ENCODE measurements at regions of chr11 and their contacts with region 1.

Region 1: GRCh38 chr11:9460322-9461067 is at the start of gene ZNF143:
- DNase-seq: peak; percentile 100
- H3K4me3 Mint-ChIP-seq: peak within 1 kb of the TSS; percentile 93
- H3K27ac Mint-ChIP-seq: peak within 1 kb of the TSS; percentile 97
- H3K4me1 Mint-ChIP-seq: peaks cover 18% of the 10 kb centered on the region
- H3K27me3 Mint-ChIP-seq: no peaks in the 10 kb centered on the region
- total RNA-seq, gene ZNF143: 30.9 and 36.8 TPM in 2 replicates

Region 2: DNA sequence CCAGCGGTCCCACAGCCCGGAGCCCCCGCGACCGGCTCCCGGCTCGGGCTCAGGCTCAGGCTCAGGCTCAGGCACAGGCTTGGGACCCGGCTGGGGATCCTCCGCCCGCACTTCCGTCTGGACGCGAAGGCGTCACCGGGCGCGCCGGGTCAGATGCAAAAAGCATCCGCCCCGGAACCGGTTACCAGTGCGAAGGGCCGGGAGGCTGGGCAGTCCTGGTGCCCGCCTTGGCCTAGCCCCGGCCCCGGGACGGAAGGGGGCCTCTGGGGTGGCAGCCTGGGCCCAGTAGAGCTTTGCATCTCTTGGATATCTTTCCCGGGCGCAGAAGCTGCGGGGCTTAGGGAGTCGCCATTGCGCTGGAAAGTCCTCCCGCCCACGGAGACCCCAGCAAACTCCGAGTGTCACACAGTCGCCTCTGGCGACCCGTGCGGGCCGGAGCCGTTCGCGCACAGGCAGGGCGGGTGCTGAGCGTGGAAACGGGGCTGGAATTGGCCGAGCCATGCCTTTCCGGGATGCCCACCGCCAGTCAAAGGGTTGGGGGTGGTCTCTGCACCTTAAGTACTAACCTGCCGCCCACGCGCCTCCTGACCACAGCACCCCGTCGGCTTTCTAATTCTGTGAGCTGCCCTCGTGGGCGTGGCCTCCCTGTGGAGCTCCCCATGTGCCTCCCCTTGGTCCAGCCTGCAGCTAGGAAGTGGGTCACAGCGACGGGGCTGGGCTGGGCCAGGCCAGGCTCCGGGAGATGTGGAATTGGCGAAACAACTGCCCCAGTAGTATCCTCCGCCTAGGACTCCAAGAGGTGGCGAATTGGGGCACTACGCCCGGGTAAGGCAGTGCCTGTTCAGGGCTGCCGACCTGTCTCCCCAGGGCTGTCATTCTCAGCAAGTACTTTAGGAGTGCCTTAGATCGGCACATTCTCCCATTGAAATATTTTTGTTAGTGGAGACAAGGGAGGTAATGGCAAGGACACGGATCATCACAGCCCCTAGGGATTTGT is 495.9 kb before region 1 on chr11 and contains the start of gene TMEM9B:
- intact Hi-C with region 1: loop called (anchors 1 kb)
- DNase-seq: peak; percentile 79
- H3K4me3 Mint-ChIP-seq: peak within 1 kb of the TSS; percentile 95
- H3K27ac Mint-ChIP-seq: peak within 1 kb of the TSS; percentile 92
- H3K4me1 Mint-ChIP-seq: peaks cover 32% of the 10 kb centered on the region
- H3K27me3 Mint-ChIP-seq: no peaks in the 10 kb centered on the region
- total RNA-seq, gene TMEM9B: 20.8 and 21.9 TPM in 2 replicates

Region 3: GRCh38 chr11:9160166-9160565 is 300.3 kb before region 1 on chr11:
- intact Hi-C with region 1: loop called (anchors 5 kb)
- DNase-seq: no peak
- H3K4me3 Mint-ChIP-seq: no peak overlapping the region
- H3K27ac Mint-ChIP-seq: peak overlapping the region; percentile 69
- H3K4me1 Mint-ChIP-seq: peaks cover 19% of the 10 kb centered on the region
- H3K27me3 Mint-ChIP-seq: no peaks in the 10 kb centered on the region

Region 4: DNA sequence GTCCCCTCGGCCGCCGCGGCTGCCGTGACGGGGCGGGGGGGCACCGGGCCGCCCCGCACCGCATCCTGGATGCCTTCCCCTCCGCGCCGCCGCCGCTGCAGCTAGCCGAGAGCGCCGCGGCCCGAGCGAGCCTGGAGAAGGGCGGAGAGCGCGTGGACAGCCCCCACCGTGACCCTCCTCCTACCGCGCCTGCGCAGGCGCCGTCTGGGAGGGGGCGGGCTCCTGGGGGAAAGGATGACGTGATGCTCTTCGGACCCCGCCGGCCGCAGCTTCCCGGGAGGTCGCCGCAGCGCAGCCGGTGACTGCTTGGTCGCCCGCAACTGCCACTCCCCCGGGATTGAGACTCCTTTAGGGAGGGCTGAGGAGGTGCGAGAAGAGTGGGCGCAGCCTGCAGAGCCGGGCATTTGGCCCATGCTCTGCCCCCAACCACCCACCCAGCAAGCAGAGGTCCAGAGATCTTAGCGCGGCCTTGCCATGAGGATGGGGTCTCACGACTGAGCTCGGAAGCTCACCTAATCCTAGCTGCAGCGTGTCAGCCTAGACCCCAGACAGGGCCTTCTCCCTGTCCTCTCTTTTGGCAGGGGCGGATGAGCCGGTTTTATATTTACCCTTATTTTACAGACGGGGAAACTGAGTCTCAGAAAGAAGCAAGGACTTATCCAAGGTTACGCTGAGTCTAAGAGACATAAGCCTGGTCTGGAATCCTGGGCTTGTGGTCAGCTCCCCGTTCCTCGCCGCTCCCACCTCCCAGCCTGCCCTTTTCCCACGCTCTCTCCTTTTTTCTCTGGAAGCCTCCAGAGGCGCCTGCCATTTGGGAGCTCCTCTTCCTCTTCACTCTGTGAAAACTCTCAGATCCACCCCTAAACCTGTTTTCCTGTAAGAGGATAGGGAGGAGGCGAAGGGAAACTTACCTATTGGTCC is 195.0 kb before region 1 on chr11 and contains the start of gene DENND5A:
- intact Hi-C with region 1: loop called (anchors 1 kb)
- DNase-seq: peak; percentile 39
- H3K4me3 Mint-ChIP-seq: peak within 1 kb of the TSS; percentile 86
- H3K27ac Mint-ChIP-seq: peak within 1 kb of the TSS; percentile 93
- H3K4me1 Mint-ChIP-seq: peaks cover 33% of the 10 kb centered on the region
- H3K27me3 Mint-ChIP-seq: peaks cover 31% of the 10 kb centered on the region
- total RNA-seq, gene DENND5A: 56.7 and 61.6 TPM in 2 replicates

Region 5: GRCh38 chr11:9363954-9364912 is 96.3 kb before region 1 on chr11:
- intact Hi-C with region 1: loop called (anchors 1 kb)
- DNase-seq: peak; percentile 72
- H3K4me3 Mint-ChIP-seq: peak overlapping the region; percentile 73
- H3K27ac Mint-ChIP-seq: peak overlapping the region; percentile 84
- H3K4me1 Mint-ChIP-seq: peaks cover 27% of the 10 kb centered on the region
- H3K27me3 Mint-ChIP-seq: no peaks in the 10 kb centered on the region

Region 6: DNA sequence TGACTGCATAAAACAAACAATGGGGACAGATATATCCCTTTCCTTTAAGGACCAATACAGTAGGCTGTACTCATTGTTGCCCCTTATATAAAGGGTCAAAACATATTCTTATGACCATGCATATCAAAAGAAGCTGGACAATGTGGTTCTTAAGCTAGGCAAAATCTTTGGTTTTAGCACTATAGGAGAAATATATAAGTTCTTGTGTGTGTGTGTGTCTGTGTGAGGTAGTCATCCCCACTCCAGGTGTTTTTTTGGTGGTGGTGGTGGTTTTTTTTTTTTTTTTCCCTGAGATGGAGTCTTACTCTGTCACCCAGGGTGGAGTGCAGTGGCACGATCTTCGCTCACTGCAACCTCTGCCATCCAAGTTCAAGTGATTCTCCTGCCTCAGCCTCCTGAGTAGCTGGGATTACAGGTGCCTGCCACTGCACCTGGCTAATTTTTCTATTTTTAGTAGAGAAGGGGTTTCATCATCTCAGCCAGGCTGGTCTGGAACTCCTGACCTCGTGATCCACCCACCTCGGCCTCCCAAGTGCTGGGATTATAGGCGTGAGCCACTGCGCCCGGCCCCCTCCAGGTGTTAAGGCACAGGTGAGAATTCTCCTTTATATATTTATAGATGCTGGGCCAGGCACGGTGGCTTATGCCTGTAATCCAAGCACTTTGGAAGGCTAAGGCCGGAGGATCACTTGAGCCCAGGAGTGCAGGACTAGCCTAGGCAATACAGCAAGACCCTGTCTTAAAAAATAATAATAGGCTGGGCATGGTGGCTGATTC is 11.7 kb before region 1 on chr11:
- intact Hi-C with region 1: no loop called
- DNase-seq: no peak
- H3K4me3 Mint-ChIP-seq: no peak overlapping the region
- H3K27ac Mint-ChIP-seq: no peak overlapping the region
- H3K4me1 Mint-ChIP-seq: peaks cover 17% of the 10 kb centered on the region
- H3K27me3 Mint-ChIP-seq: no peaks in the 10 kb centered on the region

Region 7: DNA sequence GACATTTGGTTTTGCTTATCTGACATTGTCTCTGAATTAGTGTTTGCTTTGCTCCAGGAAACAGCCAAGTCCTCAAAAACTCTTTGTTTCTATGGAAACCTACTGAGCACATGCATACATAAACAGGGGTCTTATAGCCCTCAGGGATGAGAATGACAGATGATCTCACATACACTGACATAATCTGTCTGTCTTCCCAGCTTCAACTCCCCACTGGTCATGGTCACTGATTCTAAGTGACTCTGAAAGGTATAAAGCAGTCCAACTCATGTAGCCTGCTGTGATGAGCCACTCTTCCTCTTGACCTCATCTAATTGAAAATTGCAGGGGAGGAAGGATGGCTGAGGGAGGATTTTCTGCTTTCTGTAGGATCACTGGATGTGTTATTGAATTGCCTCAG is 12.9 kb after region 1 on chr11:
- intact Hi-C with region 1: no loop called
- DNase-seq: no peak
- H3K4me3 Mint-ChIP-seq: no peak overlapping the region
- H3K27ac Mint-ChIP-seq: no peak overlapping the region
- H3K4me1 Mint-ChIP-seq: peaks cover 7% of the 10 kb centered on the region
- H3K27me3 Mint-ChIP-seq: no peaks in the 10 kb centered on the region

Region 8: DNA sequence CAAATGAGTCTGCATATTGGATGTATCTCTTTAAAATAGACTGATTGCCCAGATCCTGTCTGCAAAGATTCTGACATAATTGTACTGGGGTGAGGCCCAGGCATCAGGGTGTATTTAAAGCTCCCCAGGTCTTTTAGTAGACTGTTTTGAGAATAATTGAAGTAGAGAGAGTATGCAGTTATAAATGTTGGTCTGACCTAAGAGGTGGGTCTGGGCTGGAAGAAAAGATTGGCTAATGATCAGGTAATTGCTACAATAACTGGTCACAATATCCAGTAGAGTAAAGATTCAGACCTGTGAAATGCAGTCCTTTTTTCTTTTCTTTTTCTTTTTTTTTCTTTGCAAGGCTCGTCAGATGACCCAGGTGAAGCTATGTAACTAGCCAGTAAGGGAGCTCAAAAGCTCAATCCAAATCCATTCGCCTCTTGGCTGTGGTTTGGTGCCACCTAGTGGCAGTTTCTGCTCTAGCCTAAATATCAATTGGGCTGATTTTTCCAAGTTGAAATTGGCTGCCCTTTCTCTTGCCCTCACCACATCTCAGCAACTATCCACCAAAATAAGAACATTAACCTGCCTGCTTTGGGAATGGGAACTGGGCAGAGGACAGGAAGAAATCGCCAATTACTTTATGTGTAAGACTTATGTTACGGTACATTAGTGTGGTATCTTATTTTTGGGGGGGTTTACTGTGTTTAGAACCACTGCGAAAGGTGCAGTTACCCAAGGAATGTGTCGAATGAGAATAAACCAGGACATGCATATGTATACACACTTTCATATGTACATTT is 46.2 kb after region 1 on chr11:
- intact Hi-C with region 1: loop called (anchors 5 kb)
- DNase-seq: peak; percentile 58
- H3K4me3 Mint-ChIP-seq: no peak overlapping the region
- H3K27ac Mint-ChIP-seq: no peak overlapping the region
- H3K4me1 Mint-ChIP-seq: peaks cover 16% of the 10 kb centered on the region
- H3K27me3 Mint-ChIP-seq: no peaks in the 10 kb centered on the region

Region 9: DNA sequence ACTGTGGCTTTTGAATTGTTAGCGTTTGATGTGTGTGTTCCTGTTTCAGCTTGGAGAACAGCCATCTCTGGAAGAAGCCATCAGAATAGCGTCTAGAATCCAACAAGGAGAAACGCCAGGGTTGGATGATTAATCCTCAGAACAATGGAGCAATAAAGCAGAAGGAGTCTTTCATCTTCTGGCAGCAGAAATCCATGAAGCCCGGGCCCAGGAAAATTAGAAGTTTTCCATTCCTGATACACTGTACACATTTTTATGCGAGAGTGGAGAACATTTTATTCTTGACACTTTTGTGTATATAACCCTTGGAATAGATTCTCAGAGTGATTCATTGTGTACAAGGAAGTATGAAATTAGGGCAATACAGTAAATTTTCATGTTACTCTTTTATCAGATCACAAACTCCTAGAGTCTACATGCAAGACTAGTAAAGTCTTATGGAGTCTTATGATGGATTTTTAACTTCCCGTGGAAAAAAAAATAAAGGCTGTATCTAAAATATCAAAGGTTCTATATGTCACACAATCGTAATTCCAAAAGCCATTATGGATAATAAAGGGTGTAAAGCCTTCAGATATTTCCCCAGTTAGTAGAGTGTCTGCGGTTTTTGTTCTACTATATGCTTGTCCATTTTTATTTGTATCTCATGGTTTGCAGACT is 67.1 kb after region 1 on chr11:
- intact Hi-C with region 1: no loop called
- DNase-seq: no peak
- H3K4me3 Mint-ChIP-seq: no peak overlapping the region
- H3K27ac Mint-ChIP-seq: no peak overlapping the region
- H3K4me1 Mint-ChIP-seq: no peaks in the 10 kb centered on the region
- H3K27me3 Mint-ChIP-seq: no peaks in the 10 kb centered on the region

Region 10: GRCh38 chr11:9613118-9613829 is 152.8 kb after region 1 on chr11:
- intact Hi-C with region 1: loop called (anchors 2 kb)
- DNase-seq: peak; percentile 81
- H3K4me3 Mint-ChIP-seq: peak overlapping the region; percentile 72
- H3K27ac Mint-ChIP-seq: peak overlapping the region; percentile 98
- H3K4me1 Mint-ChIP-seq: peaks cover 42% of the 10 kb centered on the region
- H3K27me3 Mint-ChIP-seq: no peaks in the 10 kb centered on the region

Measured in activated T-helper 2 cell treated with anti-CD3 and anti-CD28 coated beads, Interferon-gamma antibody, Interleukin-2, Interleukin-4, amounts not matched to agents 10 μg/mL and 5 μg/mL and 100 μg/mL, durations not matched to agents 14 hours and 24 hours and 36 hours (primary cell).